Thyroid gland (tissue), 4 donors: ENCODE measurements at regions of chr17 and their contacts with region 1.

Region 1: DNA sequence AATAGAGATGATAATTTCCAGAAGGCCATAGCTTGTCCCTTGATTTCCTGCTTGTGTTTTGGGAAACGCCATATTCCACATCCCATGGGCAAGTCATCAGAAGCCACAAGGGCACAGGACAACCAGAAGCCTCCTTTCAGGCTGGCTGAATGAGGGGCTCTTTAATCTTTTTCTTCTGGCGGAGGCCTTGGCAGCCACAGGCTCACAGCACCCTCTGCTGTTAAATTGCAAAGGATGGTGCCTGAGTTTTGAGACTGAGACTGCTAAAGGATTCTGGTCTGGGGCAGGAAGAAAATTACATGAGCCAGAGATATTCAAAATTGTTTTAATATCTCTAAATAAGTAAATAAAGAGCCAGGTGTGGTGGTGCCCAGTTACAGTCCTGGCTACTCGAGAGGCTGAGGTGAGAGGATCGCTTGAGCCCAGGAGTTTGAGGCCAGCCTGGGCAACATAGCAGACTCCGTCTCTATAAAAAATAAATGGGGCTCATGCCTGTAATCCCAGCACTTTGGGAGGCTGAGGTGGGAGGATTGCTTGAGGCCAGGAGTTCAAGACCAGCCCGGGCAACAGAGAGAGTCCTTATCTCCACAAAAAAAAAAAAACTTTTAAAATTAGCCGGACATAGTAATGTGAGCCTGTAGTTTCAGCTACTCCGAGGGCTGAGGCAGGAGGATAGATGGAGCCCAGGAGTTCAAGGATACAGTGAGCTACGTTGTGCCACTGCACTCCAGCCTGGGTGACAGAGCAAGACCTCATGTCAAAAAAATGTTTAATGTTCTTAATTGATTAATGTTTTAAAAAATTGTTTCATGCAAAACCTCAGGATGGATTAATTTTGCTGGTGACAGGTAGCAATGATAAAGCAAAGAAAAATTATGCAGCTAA is 26.3 kb downstream of the AARSD1 start:
- DNase-seq: peak; percentile 37 to 45
- H3K4me3 ChIP-seq: no peak overlapping the region
- H3K27ac ChIP-seq: no peak overlapping the region
- H3K4me1 ChIP-seq: no peaks in the 10 kb centered on the region
- H3K27me3 ChIP-seq: no peaks in the 10 kb centered on the region
- CTCF ChIP-seq: peak; percentile 23 to 78 (median 62)
- POLR2A ChIP-seq: no peak

Region 2: GRCh38 chr17:42754782-42755181 is 183.2 kb before region 1 on chr17:
- intact Hi-C with region 1: no loop called
- DNase-seq: peak; percentile 90 to 91
- H3K4me3 ChIP-seq: no peak overlapping the region
- H3K27ac ChIP-seq: no peak overlapping the region
- H3K4me1 ChIP-seq: peaks cover 0 to 11% of the 10 kb centered on the region in 2 donors
- H3K27me3 ChIP-seq: no peaks in the 10 kb centered on the region
- CTCF ChIP-seq: no peak
- POLR2A ChIP-seq: no peak

Region 3: DNA sequence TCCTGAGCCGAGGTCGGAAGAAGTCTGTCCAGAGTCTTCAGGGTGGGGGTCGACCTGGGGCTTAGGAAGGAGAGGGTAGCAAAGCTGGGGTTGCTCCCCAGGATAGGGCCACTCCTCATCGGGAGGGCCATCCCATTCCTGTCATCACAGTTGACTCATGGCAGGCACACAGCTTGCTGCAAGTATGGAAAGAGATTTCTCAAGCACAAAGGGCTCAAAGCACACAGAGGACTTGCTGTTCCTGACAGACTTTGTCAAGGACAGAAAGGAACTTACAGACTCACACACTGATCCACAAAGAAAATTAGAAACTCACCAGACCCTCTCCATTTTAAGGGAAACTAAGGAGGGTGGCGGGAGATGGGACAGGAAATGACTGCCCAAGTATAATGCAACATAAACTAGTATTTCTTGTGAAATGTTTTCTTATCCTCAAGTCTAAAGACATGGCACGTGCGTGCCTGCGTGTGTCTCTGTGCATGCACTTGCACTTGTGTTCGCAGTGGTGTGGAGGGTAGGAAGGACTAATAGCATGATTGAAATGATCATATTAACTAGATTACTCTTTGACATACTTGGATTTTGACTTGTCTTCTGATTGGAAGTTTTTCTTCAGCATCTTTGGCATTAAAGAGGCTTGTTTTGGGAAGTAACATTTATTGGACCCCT is 91.2 kb before region 1 on chr17:
- intact Hi-C with region 1: loop called (anchors 5 kb)
- DNase-seq: no peak
- H3K4me3 ChIP-seq: no peak overlapping the region
- H3K27ac ChIP-seq: no peak overlapping the region
- H3K4me1 ChIP-seq: peaks cover 8 to 23% of the 10 kb centered on the region in 2 donors
- H3K27me3 ChIP-seq: no peaks in the 10 kb centered on the region
- CTCF ChIP-seq: no peak
- POLR2A ChIP-seq: no peak